Posterior vena cava (tissue), 2 donors: ENCODE measurements at regions of chr3 and their contacts with region 1.

Region 1: GRCh38 chr3:58491506-58492402 is at the start of gene KCTD6:
- DNase-seq: peak; percentile 98
- total RNA-seq, gene KCTD6: 7.5 to 10.6 TPM

Region 2: GRCh38 chr3:58332575-58333188 is 159.1 kb before region 1 on chr3 and contains the start of gene PXK:
- intact Hi-C with region 1: loop called in 1 of 2 experiments (anchors 5 kb)
- DNase-seq: peak; percentile 96
- total RNA-seq, gene PXK: 22.5 to 24.8 TPM

Region 3: DNA sequence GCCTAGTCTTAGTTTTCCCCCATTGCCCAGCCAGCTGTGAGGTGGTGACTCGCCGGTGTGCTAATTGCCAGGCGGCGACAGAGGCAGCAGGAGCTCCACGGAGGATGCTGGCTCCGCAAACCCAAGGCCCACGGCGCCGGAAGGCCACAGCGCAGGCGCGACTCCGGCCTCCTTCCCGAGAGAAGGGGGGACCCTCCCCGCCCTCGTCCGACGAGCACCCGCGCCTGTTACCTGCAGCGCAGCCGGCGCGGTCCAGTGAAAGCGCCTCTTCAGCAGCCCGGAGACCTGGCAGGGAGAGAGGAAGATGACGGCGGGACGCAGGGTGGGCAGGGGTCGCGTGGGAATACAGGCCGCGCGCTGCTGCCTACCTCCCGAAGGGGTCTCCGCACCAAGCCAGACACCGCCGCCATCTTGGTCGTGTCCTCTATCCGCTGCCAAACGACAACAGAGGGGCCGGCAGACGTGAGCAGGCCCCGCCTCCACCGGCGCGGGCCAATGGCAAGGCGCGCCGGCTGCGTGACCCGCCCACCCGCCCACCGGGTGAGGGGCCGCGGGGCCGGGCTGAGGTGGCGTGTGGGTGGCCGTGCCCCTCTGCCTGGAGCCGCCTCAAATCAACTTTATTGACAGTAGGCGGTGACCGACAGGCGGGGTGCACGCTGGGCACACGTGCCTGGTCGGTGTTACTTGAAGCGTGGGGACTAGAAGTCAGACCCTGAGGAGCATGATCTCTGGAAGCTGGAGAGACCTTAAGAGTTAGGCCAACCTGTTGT is 58.2 kb before region 1 on chr3 and contains the start of gene PDHB:
- intact Hi-C with region 1: loop called in 1 of 2 experiments (anchors 10 kb)
- DNase-seq: peak; percentile 98
- total RNA-seq, gene PDHB: 60.4 to 68.7 TPM

Region 4: DNA sequence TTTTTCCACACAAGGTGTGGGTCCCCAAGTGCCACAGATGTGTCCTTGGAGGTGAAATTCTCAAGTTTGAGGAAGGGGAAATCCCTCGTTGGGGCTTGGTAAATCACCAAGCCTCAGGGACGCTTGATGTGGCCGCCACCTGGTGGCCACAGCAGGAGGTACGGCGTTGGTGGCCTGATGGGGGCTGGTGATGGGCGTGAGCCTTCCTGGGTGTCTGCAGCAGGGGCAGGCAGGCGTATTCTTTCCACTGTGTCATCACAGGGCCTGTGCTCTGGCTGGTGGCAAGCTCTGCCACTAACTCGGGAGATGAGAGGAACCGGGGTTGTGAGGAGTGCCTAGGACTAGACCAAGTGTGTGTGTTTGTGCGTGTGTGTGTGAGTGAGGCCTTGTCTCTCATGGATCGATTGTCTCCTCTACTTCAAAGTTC is 41.1 kb after region 1 on chr3:
- intact Hi-C with region 1: loop called in 1 of 2 experiments (anchors 5 kb)
- DNase-seq: peak; percentile 93

Region 5: DNA sequence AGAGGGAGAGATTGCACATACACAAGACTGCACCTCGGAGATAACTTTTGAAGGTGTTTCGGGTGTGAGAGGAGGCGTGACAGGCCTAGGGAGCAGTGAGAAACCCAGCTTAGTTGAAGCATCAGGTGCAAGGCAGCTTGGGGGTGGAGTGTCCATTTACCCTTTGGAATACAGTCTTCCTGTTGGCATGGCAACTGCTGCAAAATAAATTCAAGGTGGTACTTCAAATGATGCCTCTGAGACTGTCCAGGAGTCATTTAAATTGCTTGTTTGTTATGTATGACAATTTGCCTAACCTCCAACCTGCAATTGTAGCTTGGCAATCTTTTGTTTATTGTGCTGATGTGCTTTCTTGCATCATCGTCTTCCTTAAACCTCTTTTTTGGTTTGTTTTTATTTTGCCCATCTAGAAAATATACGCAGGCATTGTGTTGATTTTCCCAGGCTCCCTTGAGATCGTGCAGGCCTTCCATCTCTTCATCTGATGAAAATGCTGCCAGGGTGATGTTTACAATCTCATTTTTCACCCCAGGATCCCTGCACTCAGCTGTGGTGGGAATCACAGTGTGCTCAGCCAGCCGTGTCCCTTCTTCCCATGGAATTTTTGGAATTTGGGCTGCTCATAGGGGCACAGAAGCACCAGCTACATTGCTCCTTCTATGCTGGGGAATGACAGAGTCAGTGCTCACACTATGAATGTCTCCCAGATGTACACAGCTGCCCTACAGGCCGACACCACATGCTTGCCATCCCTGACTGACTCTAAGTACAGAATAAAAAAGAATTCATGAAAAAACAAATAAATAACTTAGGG is 1141.2 kb after region 1 on chr3:
- intact Hi-C with region 1: loop called in 1 of 2 experiments (anchors 5 kb)
- DNase-seq: no peak